ENCODE measurements at regions of chr14 and their contacts with region 1.

Region 1: DNA sequence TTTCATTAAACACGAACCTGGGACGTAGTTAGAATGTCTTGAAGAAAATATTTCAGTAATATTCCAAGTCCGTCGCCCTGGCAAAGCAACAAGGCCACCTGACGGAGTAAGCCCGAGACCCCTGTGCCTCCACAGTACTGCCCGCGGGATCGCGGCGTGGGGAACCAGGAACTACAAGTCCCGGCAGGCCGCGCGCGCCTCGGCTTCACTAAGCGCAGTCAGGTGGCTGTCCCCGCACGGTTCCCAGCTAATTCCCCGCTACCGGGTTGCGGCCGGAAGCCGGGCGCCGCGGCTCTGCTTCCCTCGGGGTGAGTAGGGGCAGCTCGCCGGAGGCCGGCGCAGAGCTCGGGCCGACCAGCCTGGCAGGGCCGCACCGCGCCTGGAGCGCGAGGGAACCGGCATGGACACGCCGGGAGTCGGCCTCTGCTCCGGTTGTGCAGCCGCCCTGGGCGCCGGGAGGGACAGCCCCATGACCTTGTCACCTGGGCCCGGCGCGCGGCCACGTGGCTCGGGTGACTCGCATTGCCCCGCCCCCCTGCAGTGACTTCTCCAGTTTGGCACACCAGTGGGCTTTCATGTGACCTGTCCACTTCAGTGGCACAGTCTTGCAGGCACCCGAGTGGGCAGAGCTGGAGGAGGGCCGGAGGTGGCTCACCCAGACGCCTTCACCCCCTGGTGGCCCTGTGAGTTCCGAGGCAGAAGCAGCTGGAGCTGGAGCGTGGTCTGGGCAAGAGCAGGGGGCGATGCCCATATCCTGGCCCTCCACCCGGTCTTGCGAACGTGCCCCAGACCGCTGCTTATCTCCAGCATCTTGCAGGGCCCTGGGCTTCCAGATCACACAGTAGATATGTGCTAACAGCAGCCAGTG is at the start of gene ADCK1:
- DNase-seq: peak; percentile 95 to 97
- ATAC-seq: peak; percentile 95
- H3K4me3 ChIP-seq: peak within 1 kb of the TSS; percentile 65 to 80
- H3K27ac ChIP-seq: peak within 1 kb of the TSS in 1 of 2 donors; percentile 69
- H3K4me1 ChIP-seq: no peaks in the 10 kb centered on the region
- H3K27me3 ChIP-seq: no peaks in the 10 kb centered on the region
- total RNA-seq, gene ADCK1: 4.2 to 7.3 TPM

Region 2: GRCh38 chr14:77760381-77761246 is 39.5 kb before region 1 on chr14 and contains the start of gene SNW1:
- intact Hi-C with region 1: loop called in 1 of 2 experiments (anchors 1 kb)
- DNase-seq: peak; percentile 95 to 96
- ATAC-seq: peak; percentile 98
- H3K4me3 ChIP-seq: peak within 1 kb of the TSS; percentile 79 to 86
- H3K27ac ChIP-seq: peak within 1 kb of the TSS; percentile 45 to 89
- H3K4me1 ChIP-seq: peaks cover 4 to 5% of the 10 kb centered on the region in 2 donors
- H3K27me3 ChIP-seq: no peaks in the 10 kb centered on the region
- total RNA-seq, gene SNW1: 51.4 to 60.5 TPM

Region 3: DNA sequence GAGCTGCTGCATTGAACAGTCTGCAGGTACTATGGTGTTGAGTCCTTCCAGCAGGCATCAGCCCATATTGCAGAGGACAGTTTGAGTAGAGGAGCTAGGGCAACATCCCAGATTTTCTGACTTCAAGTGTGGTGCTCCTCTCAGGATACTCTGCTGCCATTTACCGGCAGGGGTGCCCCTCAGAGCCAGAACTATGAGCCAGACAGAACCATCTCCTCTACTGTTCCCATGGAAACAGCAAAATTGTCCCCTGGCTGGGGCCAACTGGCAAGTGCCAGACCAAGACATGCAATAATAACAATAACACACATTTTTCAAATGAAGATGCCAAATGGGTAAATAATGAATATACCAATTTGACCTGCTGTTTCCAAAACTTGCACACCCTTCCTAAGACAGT is 102.7 kb after region 1 on chr14:
- intact Hi-C with region 1: no loop called
- DNase-seq: no peak
- ATAC-seq: no peak
- H3K4me3 ChIP-seq: no peak overlapping the region
- H3K27ac ChIP-seq: no peak overlapping the region
- H3K4me1 ChIP-seq: no peaks in the 10 kb centered on the region
- H3K27me3 ChIP-seq: no peaks in the 10 kb centered on the region